ENCODE measurements at regions of chr10 and their contacts with region 1.

Region 1: GRCh38 chr10:90912174-90912573 is 8.7 kb downstream of the ANKRD1 start:
- DNase-seq: no peak
- H3K4me3 ChIP-seq: no peak overlapping the region
- H3K27ac ChIP-seq: no peak overlapping the region
- H3K27me3 ChIP-seq: no peaks in the 10 kb centered on the region
- CTCF ChIP-seq: no peak

Region 2: GRCh38 chr10:90893190-90893589 is 19.0 kb before region 1 on chr10:
- CTCF ChIA-PET with region 1: interaction called, 11 read pairs
- POLR2A ChIA-PET with region 1: no interaction called
- DNase-seq: no peak
- H3K4me3 ChIP-seq: no peak overlapping the region
- H3K27ac ChIP-seq: no peak overlapping the region
- H3K27me3 ChIP-seq: no peaks in the 10 kb centered on the region
- CTCF ChIP-seq: no peak

Region 3: DNA sequence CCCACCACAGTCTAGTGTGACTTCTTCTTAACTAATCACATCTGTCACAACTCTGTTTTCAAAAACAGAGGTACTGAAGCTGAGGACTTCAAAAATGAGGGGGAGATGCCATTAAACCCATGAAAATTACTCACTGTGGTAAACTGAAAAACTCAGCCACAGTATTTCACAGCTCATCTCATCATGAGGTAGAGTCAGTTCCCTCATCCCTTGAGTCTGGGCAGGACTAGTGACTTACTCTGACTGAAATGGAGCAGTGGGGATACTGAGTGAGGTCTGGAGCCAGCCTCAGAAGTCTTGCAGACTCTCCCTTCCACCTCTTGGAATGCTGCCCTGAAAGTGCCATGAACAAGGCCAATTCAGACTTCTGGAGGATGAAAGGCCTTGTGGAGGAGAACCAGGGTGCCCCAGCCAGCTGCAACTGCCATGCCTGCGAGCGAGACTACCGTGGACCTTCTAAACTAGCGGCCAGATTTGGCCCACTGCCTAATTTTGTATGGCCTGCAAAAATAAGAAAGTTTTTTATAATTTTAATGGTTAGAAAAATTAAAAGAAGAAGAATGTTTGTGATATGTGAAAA is 33.4 kb after region 1 on chr10:
- CTCF ChIA-PET with region 1: interaction called, 10 read pairs
- POLR2A ChIA-PET with region 1: no interaction called
- DNase-seq: no peak
- H3K4me3 ChIP-seq: no peak overlapping the region
- H3K27ac ChIP-seq: no peak overlapping the region
- H3K27me3 ChIP-seq: no peaks in the 10 kb centered on the region
- CTCF ChIP-seq: no peak

Region 4: DNA sequence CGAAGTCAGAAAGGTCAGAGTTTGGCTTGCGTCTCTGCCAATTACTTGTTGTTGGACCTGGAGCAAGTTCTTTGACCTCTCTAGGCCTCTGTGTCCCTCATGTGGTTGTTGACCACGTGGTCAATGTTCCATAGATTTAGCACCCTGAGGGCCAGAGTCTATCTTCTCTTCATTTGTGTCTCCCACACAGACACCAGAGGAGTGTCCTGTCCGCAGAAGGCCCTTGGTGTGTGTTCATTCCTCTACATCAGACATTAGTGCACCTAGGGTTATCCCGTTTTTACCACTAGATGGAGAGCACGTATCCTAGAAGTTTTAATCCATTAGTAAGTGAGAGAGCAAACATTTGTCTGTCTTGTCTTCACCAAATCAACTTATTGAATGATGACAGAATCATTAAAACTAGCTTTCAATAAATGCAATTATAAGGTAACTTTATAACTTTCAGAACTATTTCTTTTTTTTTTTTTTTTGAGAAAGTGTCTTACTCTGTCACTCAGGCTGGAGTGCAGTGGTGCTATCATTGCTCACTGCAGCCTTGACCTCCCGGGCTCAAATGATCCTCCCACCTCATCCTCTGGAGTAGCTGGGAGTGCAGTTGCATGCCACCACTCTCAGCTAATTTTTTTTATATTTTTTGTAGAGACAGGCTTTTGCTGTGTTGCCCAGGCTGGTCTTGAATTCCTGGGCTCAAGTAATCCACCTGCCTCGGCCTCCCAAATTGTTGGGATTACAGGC is 131.2 kb after region 1 on chr10:
- CTCF ChIA-PET with region 1: interaction called, 11 read pairs
- POLR2A ChIA-PET with region 1: no interaction called
- DNase-seq: no peak
- H3K4me3 ChIP-seq: no peak overlapping the region
- H3K27ac ChIP-seq: no peak overlapping the region
- H3K27me3 ChIP-seq: peaks cover 7% of the 10 kb centered on the region
- CTCF ChIP-seq: peak; percentile 47

Region 5: DNA sequence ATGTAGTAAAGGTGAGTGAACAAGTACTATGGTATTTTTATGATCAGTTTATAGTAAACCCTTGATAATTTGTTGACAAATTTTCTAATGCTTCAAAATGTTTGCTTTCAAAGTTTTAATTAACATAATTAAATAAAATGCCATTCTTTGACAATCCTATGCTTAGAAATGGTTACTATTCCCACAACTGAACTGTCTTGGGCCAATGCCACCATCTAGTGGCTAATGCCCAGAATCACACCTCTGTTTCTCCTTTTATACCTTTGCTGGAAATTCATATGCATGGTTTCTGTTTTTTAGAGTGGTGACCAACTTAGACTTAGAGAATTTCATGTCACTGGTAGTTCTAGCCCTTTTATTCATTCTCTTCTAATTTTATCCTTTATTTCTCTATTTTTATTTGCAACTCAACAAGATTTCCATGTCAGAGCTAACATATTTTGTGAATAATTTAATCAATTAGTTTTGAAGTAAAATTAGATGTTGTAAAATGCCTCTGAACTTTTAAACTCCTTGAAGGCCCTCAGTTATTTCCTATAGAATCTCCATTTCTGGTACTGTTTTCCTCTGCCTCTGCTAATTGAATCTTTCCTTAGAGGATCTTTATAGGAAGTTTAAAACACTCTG is 339.4 kb after region 1 on chr10:
- CTCF ChIA-PET with region 1: interaction called, 189 read pairs
- POLR2A ChIA-PET with region 1: no interaction called
- DNase-seq: no peak
- H3K4me3 ChIP-seq: no peak overlapping the region
- H3K27ac ChIP-seq: no peak overlapping the region
- H3K27me3 ChIP-seq: no peaks in the 10 kb centered on the region
- CTCF ChIP-seq: peak; percentile 93

Region 6: DNA sequence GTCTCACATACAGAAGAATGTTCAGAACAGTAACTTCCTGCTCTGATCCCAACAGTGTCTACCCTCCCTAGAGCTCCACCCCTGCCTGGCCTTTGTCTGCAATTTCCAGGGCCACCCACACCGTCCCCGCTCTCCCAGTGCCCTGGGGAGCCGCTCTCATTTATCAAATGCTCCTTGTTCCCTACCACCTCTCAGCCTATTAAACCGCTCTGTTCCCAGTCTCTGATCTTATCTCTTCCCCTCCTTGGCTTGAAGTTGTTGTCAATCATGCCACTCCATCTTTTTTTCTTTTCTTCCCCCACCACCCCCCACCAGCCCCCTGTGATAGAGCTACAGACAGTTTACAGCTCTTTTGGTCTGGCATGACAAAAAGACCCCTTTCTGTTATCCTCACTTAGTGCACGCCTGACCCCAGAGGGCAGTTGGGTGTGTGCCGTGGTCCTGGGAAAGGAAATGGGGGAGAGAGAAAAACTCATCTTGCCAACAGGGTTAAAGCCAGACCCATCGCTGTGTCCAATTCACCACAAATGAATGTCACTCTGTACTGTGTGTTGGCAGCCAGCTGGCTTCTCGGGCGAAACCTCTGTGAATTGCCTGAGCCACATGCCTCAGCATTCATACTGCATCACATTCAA is 469.2 kb after region 1 on chr10:
- CTCF ChIA-PET with region 1: no interaction called
- POLR2A ChIA-PET with region 1: no interaction called
- DNase-seq: no peak
- H3K4me3 ChIP-seq: no peak overlapping the region
- H3K27ac ChIP-seq: no peak overlapping the region
- H3K27me3 ChIP-seq: peaks cover 13% of the 10 kb centered on the region
- CTCF ChIP-seq: no peak

Region 7: DNA sequence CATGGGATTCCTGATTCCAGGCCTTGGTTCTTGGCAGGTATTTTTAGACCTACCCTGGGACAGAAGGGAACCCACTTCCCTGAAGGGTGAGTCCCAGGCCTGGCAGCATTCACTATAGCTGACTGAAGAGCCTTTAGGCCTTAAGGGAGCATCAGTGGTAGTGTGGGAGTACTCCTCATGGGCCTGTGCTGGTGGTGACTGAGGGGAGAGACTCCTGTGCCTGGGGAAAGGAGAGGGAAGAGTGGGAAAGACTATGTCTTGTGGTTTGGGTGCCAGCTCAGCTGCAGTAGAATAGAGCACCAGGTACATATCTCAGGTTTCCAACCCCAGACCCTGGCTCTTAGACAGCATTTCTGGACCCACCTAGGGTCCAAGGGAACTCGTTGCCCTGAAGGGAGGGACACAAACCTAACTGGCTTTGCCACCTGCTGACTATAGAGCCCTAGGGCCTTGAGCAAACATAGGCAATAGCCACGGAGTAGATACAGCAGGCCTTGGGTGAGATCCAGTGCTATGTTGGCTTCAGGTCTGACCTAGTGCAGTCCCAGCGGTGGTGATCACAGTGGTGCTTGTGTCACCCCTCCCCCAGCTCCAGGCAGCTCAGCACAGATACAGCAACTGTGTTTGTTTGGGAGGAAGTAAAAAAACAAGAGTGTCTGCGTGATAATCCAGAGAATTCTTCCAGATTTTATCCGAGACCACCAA is 876.2 kb after region 1 on chr10:
- CTCF ChIA-PET with region 1: no interaction called
- POLR2A ChIA-PET with region 1: no interaction called
- DNase-seq: no peak
- H3K4me3 ChIP-seq: no peak overlapping the region
- H3K27ac ChIP-seq: no peak overlapping the region
- H3K27me3 ChIP-seq: no peaks in the 10 kb centered on the region
- CTCF ChIP-seq: no peak

Measured in AG04450 (cell line).